ENCODE measurements at regions of chr11 and their contacts with region 1.

Region 1: GRCh38 chr11:31045335-31045734 is 324.2 kb downstream of the DCDC1 start:
- DNase-seq: no peak
- ATAC-seq: no peak

Region 2: GRCh38 chr11:30960387-30960992 is 84.8 kb before region 1 on chr11:
- intact Hi-C with region 1: loop called in 1 of 2 experiments (anchors 5 kb)
- DNase-seq: no peak
- ATAC-seq: no peak

Measured in left cardiac atrium (tissue), 4 donors.